AG04449 (cell line): ENCODE measurements at regions of chr11 and their contacts with region 1.

Region 1: GRCh38 chr11:62841361-62842184 is 2.2 kb upstream of the WDR74 start:
- DNase-seq: peak; percentile 99
- H3K4me3 ChIP-seq: peak overlapping the region; percentile 49
- CTCF ChIP-seq: no peak

Region 2: GRCh38 chr11:62556108-62556871 is 285.3 kb before region 1 on chr11:
- CTCF ChIA-PET with region 1: no interaction called
- POLR2A ChIA-PET with region 1: interaction called, 13 read pairs
- DNase-seq: peak; percentile 70
- H3K4me3 ChIP-seq: peak overlapping the region; percentile 39
- CTCF ChIP-seq: no peak

Region 3: DNA sequence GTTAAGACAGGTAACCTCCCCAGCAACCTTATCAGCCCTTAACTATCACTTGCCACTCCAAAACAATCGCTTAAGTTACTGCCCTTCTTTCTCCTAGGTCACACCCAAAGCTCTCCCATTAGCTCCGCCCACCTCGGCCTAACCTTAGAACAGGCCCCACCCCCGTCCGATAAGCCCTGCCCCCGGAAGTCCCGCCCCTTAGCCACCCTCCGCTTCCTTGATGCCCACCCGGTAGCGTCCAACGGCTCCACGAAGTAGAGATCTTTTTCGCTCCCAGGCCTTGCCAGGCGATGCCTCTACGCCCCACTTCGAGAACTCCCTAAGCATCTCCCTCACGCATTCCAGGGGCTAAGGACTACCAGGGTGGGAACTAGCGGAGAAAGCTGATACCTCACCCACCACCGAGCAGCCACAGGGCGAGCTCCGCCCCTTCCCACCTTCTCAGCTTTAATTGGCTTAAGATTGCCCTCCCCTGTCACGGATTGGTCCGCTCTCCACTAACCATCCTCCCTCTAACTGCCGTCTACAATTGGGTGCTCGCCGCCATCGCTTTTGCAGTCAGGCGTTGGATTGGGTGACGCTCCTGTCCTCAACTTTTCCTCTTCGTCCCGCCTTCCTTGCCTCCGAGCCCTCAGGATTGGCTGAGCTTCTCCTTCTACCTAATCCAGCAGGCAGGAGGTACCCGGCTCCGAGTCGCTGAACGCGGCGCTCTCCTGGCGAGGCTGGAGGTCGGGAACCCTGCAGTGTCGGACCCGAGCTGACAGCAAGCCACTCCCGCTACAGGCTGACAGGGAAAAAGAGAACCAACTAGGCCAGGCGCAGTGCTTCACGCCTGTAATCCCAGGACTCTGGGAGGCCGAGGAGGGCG is 87.6 kb before region 1 on chr11 and contains the start of gene ZBTB3:
- CTCF ChIA-PET with region 1: no interaction called
- POLR2A ChIA-PET with region 1: interaction called, 14 read pairs
- DNase-seq: peak; percentile 93
- H3K4me3 ChIP-seq: peak within 1 kb of the TSS; percentile 75
- CTCF ChIP-seq: no peak

Region 4: GRCh38 chr11:62805076-62805892 is 36.3 kb before region 1 on chr11 and contains the start of gene NXF1:
- CTCF ChIA-PET with region 1: no interaction called
- POLR2A ChIA-PET with region 1: interaction called, 19 read pairs
- DNase-seq: peak; percentile 50
- H3K4me3 ChIP-seq: peak within 1 kb of the TSS; percentile 81
- CTCF ChIP-seq: no peak

Region 5: GRCh38 chr11:62880803-62881578 is 39.4 kb after region 1 on chr11 and contains the start of gene SLC3A2:
- CTCF ChIA-PET with region 1: no interaction called
- POLR2A ChIA-PET with region 1: interaction called, 42 read pairs
- DNase-seq: no peak
- H3K4me3 ChIP-seq: peak within 1 kb of the TSS; percentile 100
- CTCF ChIP-seq: peak; percentile 86